CD4-positive, alpha-beta T cell (primary cell): ENCODE measurements at regions of chr2 and their contacts with region 1.

Region 1: GRCh38 chr2:70070541-70071268 is 16.6 kb upstream of the PCBP1 start:
- DNase-seq: peak; percentile 30 to 89 (median 47)
- ATAC-seq: peak; percentile 72
- H3K4me3 ChIP-seq: peak overlapping the region; percentile 24
- H3K4me3 Mint-ChIP-seq: peak overlapping the region; percentile 83
- H3K27ac ChIP-seq: peak overlapping the region; percentile 40 to 84
- H3K27ac Mint-ChIP-seq: peak overlapping the region; percentile 86
- H3K4me1 ChIP-seq: peaks cover 46% of the 10 kb centered on the region
- H3K4me1 Mint-ChIP-seq: peaks cover 61% of the 10 kb centered on the region
- H3K27me3 ChIP-seq: no peaks in the 10 kb centered on the region
- H3K27me3 Mint-ChIP-seq: no peaks in the 10 kb centered on the region
- CTCF ChIP-seq: peak; percentile 80

Region 2: DNA sequence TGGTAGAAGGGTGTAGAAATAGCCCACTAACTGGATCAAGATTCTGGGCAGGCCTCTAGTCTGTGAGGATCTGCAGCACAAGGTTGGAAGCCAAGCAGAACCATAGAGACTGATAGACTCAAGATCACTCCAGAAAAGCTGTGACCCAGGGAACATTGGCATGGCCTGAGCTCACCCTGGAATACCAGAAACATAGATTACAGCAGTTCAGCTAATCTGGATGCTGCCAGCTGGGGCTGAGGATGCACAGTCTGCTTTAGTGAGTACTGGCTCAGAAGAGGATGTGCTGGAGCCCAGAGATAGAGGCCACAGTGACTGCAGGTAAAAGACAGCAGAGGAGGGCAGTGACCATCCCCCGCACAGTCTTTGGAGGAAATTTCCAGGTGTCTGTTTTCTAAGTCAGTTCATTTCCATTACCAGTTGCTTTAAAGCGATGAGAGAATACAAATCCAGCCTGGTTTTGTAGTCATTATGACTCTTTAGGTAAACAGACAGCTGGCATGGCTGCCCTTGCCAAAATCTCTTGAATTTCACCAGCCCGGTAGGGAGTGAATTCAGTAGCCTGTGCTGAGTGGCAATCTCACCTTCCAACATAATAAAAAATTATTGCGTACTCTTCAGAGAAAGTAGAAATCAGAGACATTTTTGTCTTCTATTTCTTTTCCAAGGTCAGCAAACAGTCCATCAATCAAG is 938.6 kb before region 1 on chr2:
- CTCF ChIA-PET with region 1: no interaction called
- POLR2A ChIA-PET with region 1: no interaction called
- intact Hi-C with region 1: no loop called
- DNase-seq: no peak
- ATAC-seq: no peak
- H3K4me3 ChIP-seq: no peak overlapping the region
- H3K4me3 Mint-ChIP-seq: no peak overlapping the region
- H3K27ac ChIP-seq: no peak overlapping the region
- H3K27ac Mint-ChIP-seq: no peak overlapping the region
- H3K4me1 ChIP-seq: no peaks in the 10 kb centered on the region
- H3K4me1 Mint-ChIP-seq: no peaks in the 10 kb centered on the region
- H3K27me3 ChIP-seq: peaks cover 3 to 5% of the 10 kb centered on the region in 2 experiments
- H3K27me3 Mint-ChIP-seq: peaks cover 17% of the 10 kb centered on the region
- CTCF ChIP-seq: no peak

Region 3: GRCh38 chr2:69829256-69830046 is 241.3 kb before region 1 on chr2 and contains the start of gene GMCL1:
- CTCF ChIA-PET with region 1: no interaction called
- POLR2A ChIA-PET with region 1: no interaction called
- intact Hi-C with region 1: loop called in 1 of 2 experiments (anchors 10 kb)
- DNase-seq: peak; percentile 97 to 100 (median 98)
- ATAC-seq: peak; percentile 93
- H3K4me3 ChIP-seq: peak within 1 kb of the TSS; percentile 74
- H3K4me3 Mint-ChIP-seq: peak within 1 kb of the TSS; percentile 99
- H3K27ac ChIP-seq: peak within 1 kb of the TSS; percentile 89 to 93
- H3K27ac Mint-ChIP-seq: peak within 1 kb of the TSS; percentile 99
- H3K4me1 ChIP-seq: peaks cover 33% of the 10 kb centered on the region
- H3K4me1 Mint-ChIP-seq: peaks cover 65% of the 10 kb centered on the region
- H3K27me3 ChIP-seq: no peaks in the 10 kb centered on the region
- H3K27me3 Mint-ChIP-seq: no peaks in the 10 kb centered on the region
- CTCF ChIP-seq: no peak
- total RNA-seq, gene GMCL1: 29.7 to 29.8 TPM

Region 4: GRCh38 chr2:70080610-70081200 is 10.0 kb after region 1 on chr2:
- CTCF ChIA-PET with region 1: interaction called, 35 read pairs
- POLR2A ChIA-PET with region 1: interaction called, 235 read pairs
- intact Hi-C with region 1: loop called (anchors 1 to 2 kb)
- DNase-seq: no peak
- ATAC-seq: no peak
- H3K4me3 ChIP-seq: no peak overlapping the region
- H3K4me3 Mint-ChIP-seq: no peak overlapping the region
- H3K27ac ChIP-seq: no peak overlapping the region
- H3K27ac Mint-ChIP-seq: peak overlapping the region; percentile 64
- H3K4me1 ChIP-seq: peaks cover 52% of the 10 kb centered on the region
- H3K4me1 Mint-ChIP-seq: peaks cover 67% of the 10 kb centered on the region
- H3K27me3 ChIP-seq: no peaks in the 10 kb centered on the region
- H3K27me3 Mint-ChIP-seq: no peaks in the 10 kb centered on the region
- CTCF ChIP-seq: no peak

Region 5: GRCh38 chr2:70094978-70095719 is 24.4 kb after region 1 on chr2:
- CTCF ChIA-PET with region 1: interaction called, 8 read pairs
- POLR2A ChIA-PET with region 1: interaction called, 15 read pairs
- intact Hi-C with region 1: no loop called
- DNase-seq: peak in 11 of 14 experiments; percentile 36 to 89 (median 53)
- ATAC-seq: peak; percentile 93
- H3K4me3 ChIP-seq: peak overlapping the region; percentile 43
- H3K4me3 Mint-ChIP-seq: peak overlapping the region; percentile 83
- H3K27ac ChIP-seq: peak overlapping the region; percentile 74 to 80
- H3K27ac Mint-ChIP-seq: peak overlapping the region; percentile 96
- H3K4me1 ChIP-seq: peaks cover 57% of the 10 kb centered on the region
- H3K4me1 Mint-ChIP-seq: peaks cover 46% of the 10 kb centered on the region
- H3K27me3 ChIP-seq: no peaks in the 10 kb centered on the region
- H3K27me3 Mint-ChIP-seq: no peaks in the 10 kb centered on the region
- CTCF ChIP-seq: no peak

Region 6: GRCh38 chr2:70124983-70125480 is 54.3 kb after region 1 on chr2:
- CTCF ChIA-PET with region 1: interaction called, 6 read pairs
- POLR2A ChIA-PET with region 1: interaction called, 26 read pairs
- intact Hi-C with region 1: no loop called
- DNase-seq: peak; percentile 57 to 88 (median 62)
- ATAC-seq: peak; percentile 59
- H3K4me3 ChIP-seq: peak overlapping the region; percentile 83
- H3K4me3 Mint-ChIP-seq: peak overlapping the region; percentile 93
- H3K27ac ChIP-seq: peak overlapping the region; percentile 92 to 99
- H3K27ac Mint-ChIP-seq: peak overlapping the region; percentile 99
- H3K4me1 ChIP-seq: peaks cover 72% of the 10 kb centered on the region
- H3K4me1 Mint-ChIP-seq: peaks cover 76% of the 10 kb centered on the region
- H3K27me3 ChIP-seq: no peaks in the 10 kb centered on the region
- H3K27me3 Mint-ChIP-seq: no peaks in the 10 kb centered on the region
- CTCF ChIP-seq: no peak

Region 7: DNA sequence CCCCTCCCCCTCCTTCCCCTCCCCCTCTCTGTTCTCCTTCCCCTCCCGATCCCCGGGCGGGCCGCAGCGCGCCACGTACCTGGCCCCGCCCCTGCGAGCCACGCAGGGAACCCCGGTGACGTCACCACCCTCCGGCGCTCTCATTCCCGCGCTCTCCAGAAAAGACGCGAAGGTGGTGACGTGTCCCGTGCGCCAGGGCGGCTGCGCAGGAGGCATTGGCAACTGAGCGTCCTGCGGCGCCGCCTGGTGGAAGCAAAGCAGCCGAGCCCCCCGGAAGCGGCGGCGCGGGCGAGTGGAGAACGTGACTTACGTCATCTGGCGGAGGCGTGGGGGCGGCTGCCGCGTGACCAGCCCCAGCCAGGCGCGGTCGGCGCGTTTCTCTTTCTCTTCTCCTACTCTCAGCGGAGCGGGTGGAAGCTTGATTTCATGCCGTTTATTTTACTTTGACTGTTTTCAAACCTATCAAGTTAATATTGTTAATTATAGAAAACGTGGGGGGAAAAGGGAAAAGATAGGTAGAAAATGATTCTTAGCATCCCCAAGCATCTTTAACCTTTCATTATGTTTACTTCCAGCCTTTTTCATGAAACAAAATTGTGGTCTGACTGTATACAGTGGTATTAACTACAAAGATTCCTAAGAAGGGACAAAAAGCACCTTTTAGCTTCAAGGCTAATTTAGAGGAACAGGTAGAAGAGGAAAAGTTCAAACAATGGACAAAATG is 72.0 kb after region 1 on chr2:
- CTCF ChIA-PET with region 1: interaction called, 45 read pairs
- POLR2A ChIA-PET with region 1: interaction called, 55 read pairs
- intact Hi-C with region 1: loop called in 1 of 2 experiments (anchors 1 kb)
- DNase-seq: peak; percentile 98 to 100 (median 100)
- ATAC-seq: peak; percentile 74
- H3K4me3 ChIP-seq: peak overlapping the region; percentile 65
- H3K4me3 Mint-ChIP-seq: peak overlapping the region; percentile 99
- H3K27ac ChIP-seq: peak overlapping the region; percentile 97 to 99
- H3K27ac Mint-ChIP-seq: peak overlapping the region; percentile 99
- H3K4me1 ChIP-seq: peaks cover 60% of the 10 kb centered on the region
- H3K4me1 Mint-ChIP-seq: peaks cover 54% of the 10 kb centered on the region
- H3K27me3 ChIP-seq: no peaks in the 10 kb centered on the region
- H3K27me3 Mint-ChIP-seq: no peaks in the 10 kb centered on the region
- CTCF ChIP-seq: peak; percentile 86